WTC11 (cell line): ENCODE measurements at regions of chr21 and their contacts with region 1.

Region 1: DNA sequence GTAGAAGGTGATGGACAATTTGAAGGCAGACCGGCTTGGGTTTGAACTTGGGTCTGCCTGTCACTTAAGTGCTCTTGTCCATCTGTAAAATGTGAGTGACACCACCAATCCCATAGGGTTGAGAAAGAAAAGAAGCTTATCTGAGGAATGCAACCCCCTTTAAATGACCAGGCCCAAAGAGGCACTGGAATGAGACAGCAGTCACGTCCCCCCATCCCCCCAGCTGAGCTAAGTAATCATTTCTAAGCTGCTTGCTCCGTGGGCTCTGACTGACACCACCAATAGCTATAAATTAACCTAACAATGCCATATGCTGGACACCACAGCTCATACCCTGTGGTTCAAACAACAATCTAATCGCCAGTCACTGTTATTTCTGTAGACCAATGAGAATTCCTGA is 15.1 kb downstream of the LCA5L start:
- DNase-seq: no peak
- ATAC-seq: peak; percentile 57
- H3K4me3 Mint-ChIP-seq: no peak overlapping the region
- H3K27ac Mint-ChIP-seq: no peak overlapping the region
- H3K4me1 Mint-ChIP-seq: peaks cover 17% of the 10 kb centered on the region
- H3K27me3 Mint-ChIP-seq: no peaks in the 10 kb centered on the region; the same call in 1 of the 2 replicates
- CTCF ChIP-seq: no peak

Region 2: GRCh38 chr21:39373644-39374043 is 56.8 kb before region 1 on chr21:
- CTCF ChIA-PET with region 1: no interaction called
- POLR2A ChIA-PET with region 1: no interaction called
- DNase-seq: no peak
- ATAC-seq: peak; percentile 83
- H3K4me3 Mint-ChIP-seq: no peak overlapping the region
- H3K27ac Mint-ChIP-seq: peak overlapping the region; percentile 20
- H3K4me1 Mint-ChIP-seq: peaks cover 12% of the 10 kb centered on the region
- H3K27me3 Mint-ChIP-seq: no peaks in the 10 kb centered on the region
- CTCF ChIP-seq: no peak

Region 3: GRCh38 chr21:39441502-39442475 is 11.3 kb after region 1 on chr21:
- CTCF ChIA-PET with region 1: interaction called, 19 read pairs
- POLR2A ChIA-PET with region 1: no interaction called
- DNase-seq: peak; percentile 39
- ATAC-seq: peak; percentile 53
- H3K4me3 Mint-ChIP-seq: no peak overlapping the region
- H3K27ac Mint-ChIP-seq: no peak overlapping the region
- H3K4me1 Mint-ChIP-seq: peaks cover 18% of the 10 kb centered on the region
- H3K27me3 Mint-ChIP-seq: peaks cover 7% of the 10 kb centered on the region
- CTCF ChIP-seq: peak; percentile 55; the same call in 1 of the 2 replicates

Region 4: GRCh38 chr21:39616211-39616772 is 185.8 kb after region 1 on chr21:
- CTCF ChIA-PET with region 1: no interaction called
- POLR2A ChIA-PET with region 1: no interaction called
- DNase-seq: no peak
- ATAC-seq: no peak
- H3K4me3 Mint-ChIP-seq: no peak overlapping the region
- H3K27ac Mint-ChIP-seq: no peak overlapping the region
- H3K4me1 Mint-ChIP-seq: peaks cover 56% of the 10 kb centered on the region
- H3K27me3 Mint-ChIP-seq: no peaks in the 10 kb centered on the region
- CTCF ChIP-seq: no peak